HAP-1 (cell line): ENCODE measurements at regions of chr13 and their contacts with region 1.

Region 1: DNA sequence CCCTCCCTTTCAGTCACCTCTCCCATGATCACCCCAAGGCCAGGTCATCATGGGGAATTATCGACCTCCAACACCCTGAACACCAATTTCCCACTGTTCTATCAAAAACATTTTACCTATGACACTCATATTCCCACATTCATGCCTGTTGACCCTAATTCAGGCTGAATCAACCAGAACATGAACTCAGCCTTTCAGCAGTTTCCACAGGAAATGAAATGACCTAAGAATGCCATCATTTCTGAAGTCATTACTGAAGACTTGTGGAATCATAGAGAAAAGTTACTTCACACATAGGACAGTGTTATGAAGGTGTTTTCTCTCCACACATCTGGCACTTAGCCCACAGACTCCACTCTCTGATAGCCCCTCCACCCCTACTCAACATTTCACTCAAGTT is 29.9 kb upstream of the FAM124A start:
- DNase-seq: no peak
- H3K4me3 ChIP-seq: no peak overlapping the region
- H3K4me1 ChIP-seq: no peaks in the 10 kb centered on the region
- H3K27me3 ChIP-seq: no peaks in the 10 kb centered on the region

Region 2: GRCh38 chr13:51093574-51093973 is 98.8 kb before region 1 on chr13:
- in situ Hi-C with region 1: loop called (anchors 25 kb)
- DNase-seq: no peak
- H3K4me3 ChIP-seq: no peak overlapping the region
- H3K4me1 ChIP-seq: no peaks in the 10 kb centered on the region
- H3K27me3 ChIP-seq: no peaks in the 10 kb centered on the region

Region 3: DNA sequence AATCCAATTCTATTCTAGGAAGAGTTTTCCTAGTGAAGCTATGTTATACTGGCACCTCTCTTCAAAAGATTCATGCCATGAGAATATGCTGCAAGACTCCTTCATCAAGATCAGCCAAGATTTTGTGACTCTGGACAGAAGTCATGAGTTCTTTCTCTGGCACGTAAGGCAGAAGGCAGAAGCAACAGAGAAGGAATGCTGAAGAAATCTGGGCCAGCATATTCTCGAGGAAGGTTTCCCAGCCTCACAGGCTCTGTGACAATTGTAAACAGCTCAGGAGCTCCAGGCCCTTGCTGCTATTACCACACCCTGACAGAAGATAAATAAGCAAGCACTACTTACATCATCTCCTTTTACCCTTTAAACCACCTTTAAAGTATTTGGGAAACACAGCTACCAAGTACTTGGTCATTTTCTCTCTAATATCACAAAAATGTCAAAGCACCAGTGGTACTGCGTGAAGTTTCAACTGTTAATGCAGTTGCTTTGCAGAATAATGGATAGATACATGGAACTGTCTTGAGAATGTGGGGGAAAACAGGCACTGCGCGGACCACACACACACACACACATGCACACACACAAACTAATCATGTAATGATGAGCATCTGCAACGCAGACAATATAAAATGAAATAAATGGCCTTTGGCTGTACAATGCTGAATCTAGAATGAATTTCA is 205.1 kb after region 1 on chr13:
- in situ Hi-C with region 1: no loop called
- DNase-seq: no peak
- H3K4me3 ChIP-seq: no peak overlapping the region
- H3K4me1 ChIP-seq: no peaks in the 10 kb centered on the region
- H3K27me3 ChIP-seq: no peaks in the 10 kb centered on the region